ENCODE measurements at regions of chr10 and their contacts with region 1.

Region 1: DNA sequence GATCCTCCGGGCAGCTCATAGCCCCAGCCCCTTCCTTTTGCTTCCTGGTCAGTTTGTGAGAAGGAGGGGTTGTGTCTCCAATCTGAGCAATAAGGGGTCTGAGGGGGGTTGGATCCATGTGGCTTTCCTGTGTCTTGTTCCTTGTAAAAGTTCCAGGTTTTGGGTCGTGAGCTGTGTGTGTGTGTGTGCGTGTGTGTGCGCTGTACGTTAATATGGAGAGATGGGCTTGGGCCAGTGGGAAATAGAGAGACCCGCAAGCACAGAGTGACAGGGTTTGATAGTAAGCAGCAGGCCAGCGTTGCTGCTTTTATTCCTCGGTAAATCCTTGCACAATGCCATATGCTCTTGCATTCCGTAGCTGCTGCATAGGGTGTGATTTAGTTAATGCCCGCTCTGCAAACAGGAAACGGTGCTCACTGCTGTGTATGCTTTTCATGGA is 108.5 kb downstream of the TCF7L2 start:
- DNase-seq: peak in 7 of 42 donors; percentile 10 to 57 (median 17)

Region 2: DNA sequence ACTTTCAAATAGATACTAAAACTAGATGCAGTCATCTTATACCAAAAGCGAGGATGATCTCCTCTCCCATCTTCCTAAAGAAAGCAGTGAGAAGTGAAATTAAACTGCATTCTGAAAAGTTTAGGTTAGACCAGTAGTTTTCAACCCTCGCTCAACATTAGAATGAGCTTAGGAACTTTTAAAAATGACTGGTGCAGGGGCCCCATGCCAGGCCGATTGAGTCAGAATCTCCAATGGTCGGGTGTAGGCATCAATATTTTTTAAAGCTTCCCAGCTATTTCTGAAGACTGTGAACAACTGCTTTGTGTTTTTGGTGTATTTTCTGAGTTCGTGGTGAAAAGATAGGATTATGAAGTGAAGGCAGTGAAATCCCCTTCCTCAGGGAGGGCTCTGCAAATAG is 465.5 kb before region 1 on chr10:
- intact Hi-C with region 1: no loop called
- DNase-seq: no peak

Region 3: GRCh38 chr10:112852306-112852705 is 206.2 kb before region 1 on chr10:
- intact Hi-C with region 1: no loop called
- DNase-seq: peak in 33 of 42 donors; percentile 10 to 62 (median 35)

Region 4: GRCh38 chr10:112949875-112950507 is 108.6 kb before region 1 on chr10 and contains the start of gene TCF7L2:
- intact Hi-C with region 1: loop called (anchors 5 kb)
- DNase-seq: peak; percentile 82 to 98 (median 94)

Region 5: DNA sequence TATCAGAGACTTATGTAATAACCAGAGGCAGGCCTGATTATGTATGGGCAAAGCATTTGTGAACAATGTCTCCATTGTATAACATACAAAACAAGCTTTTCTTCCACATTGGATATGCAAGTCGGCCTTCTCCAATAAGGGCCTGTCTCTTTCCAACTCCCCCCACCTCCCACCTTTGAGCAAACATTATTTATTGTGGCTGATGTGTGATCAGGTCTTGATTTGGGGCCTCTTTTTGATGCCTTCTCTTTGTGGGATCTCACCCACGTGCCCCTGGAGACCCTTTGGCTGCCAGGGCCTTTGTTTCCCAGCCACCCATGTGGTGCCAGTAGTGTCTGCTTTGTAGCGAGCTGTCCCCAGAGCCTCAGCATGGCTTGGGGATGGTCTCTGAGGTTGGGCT is 55.5 kb before region 1 on chr10:
- intact Hi-C with region 1: loop called (anchors 2 kb)
- DNase-seq: peak in 31 of 42 donors; percentile 14 to 84 (median 47)

Region 6: GRCh38 chr10:113111859-113112853 is 53.6 kb after region 1 on chr10:
- intact Hi-C with region 1: loop called (anchors 10 kb)
- DNase-seq: no peak

Measured in head of caudate nucleus (tissue), 42 donors.